ENCODE measurements at regions of chr1 and their contacts with region 1.

Region 1: DNA sequence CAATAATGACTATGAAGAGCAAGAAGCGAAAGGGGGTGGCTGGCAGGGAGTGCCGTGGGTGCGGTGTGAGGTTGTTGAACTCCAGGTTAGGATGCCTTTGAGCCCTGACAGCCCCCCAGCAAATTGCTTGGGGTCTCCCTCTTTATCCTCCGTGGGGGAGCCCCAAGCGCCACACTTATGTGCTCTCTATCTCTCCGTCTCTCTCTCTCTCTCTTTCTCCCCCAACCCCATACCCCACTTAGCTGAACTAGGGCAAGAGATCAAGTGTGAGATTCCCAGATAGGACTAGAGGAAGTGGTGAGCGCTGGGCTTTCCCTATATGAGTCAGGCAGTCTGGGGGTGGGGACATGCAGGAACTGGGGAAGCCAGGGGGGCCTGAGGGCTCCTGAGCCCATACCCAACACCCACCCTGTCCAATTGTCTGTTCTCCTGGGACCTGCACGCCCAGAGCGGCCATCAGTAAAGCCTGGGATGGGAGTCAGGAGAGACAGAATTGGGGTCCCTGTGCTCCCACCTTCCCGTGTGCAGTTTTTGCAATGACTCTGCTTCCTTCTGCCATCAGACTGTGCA is 7.8 kb downstream of the EFHD2 start:
- DNase-seq: peak in 1 of 3 donors; percentile 40
- ATAC-seq: peak; percentile 46 to 52
- H3K4me3 ChIP-seq: no peak overlapping the region
- H3K27ac ChIP-seq: peak overlapping the region; percentile 12
- H3K4me1 ChIP-seq: peaks cover 4% of the 10 kb centered on the region
- H3K27me3 ChIP-seq: no peaks in the 10 kb centered on the region

Region 2: DNA sequence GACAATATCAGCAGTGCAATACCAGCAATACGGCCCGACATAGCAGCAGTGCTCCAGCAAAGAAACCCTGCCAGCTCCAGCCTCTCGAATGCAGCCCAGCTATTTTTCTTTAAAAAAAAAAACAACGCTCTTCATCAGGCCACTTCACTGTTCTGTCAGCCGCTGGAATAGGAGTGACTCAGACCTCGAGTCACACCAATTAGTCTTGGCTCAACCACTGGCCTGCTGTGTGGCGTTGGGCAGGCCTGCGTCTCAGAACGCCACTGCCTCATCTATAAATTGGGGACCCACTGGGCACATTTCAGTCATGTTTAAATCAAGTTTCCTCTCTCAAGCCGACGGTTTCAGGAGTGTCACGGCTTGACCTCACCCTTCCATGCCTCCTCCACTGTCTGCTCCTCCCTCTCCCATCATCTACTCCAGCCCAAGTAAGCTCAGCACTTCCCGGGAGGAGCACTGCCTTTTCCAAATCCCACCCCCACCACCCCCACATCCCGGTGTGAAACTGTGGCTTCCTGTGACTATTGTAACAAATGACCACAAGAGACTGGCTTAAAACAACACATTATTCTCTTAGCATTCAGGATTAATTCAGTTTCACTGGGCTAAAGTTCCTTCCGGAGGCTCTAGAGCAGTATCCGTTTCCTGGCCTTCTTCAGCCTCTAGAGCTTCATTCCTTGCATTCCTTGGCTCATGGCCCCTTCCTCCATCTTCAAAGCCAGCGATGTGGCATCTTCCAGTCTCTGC is 79.6 kb before region 1 on chr1:
- intact Hi-C with region 1: loop called in 1 of 4 experiments (anchors 5 kb)
- DNase-seq: peak in 1 of 3 donors; percentile 47
- ATAC-seq: peak; percentile 80 to 91
- H3K4me3 ChIP-seq: no peak overlapping the region
- H3K27ac ChIP-seq: peak overlapping the region; percentile 83
- H3K4me1 ChIP-seq: peaks cover 11% of the 10 kb centered on the region
- H3K27me3 ChIP-seq: no peaks in the 10 kb centered on the region

Measured in right cardiac atrium (tissue), 5 donors.